ENCODE measurements at regions of chr16 and their contacts with region 1.

Region 1: DNA sequence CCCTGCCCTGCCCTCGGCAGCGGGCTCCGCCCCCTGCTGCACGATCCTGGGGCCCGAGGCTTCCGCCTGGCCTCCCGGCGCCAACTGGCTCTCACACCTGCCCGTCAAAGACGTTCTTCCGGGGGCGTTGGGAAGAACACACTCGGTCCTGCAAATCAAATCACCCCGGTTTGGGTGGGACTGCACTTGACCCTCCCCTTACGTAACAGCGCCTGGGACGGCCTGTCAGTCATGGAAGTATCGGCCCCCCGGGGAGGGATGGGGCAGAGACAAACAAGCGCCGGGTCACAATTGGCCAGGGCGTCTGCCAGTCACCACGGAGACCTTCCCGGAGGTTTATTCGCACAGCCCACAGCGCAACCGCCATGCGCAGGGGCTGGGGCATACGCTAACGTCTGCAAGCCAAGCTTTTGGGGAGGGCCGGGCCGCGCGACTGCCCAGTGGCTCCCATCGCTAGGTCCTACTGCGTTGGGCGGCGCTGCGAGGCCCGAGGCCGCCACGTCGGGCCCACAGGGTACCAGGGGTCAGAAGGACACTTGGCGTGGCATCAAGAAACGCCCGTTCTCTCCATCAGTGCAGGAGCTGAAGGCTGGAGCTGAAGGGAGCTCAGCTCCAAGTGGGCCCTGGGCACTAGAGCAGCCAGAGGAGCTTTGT is 388 bp upstream of the AKTIP start:
- DNase-seq: peak; percentile 100

Region 2: DNA sequence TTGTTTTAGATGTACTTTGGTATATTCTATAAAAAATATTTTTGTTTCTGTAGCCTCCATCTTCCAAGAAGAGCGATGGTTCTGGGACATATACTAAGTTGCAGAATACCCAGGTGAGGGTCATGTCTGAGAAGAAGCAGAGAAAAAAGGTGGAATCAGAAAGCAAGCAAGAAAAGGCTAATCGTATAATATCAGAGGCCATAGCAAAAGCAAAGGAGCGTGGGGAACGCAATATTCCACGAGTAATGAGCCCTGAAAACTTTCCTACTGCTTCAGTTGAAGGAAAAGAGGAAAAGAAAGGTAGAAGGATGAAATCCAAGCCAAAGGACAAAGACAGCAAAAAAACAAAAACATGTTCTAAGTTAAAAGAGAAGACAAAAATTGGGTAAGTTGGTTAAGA is 294.0 kb before region 1 on chr16:
- intact Hi-C with region 1: no loop called
- DNase-seq: no peak

Region 3: GRCh38 chr16:53435066-53435688 is 68.2 kb before region 1 on chr16:
- intact Hi-C with region 1: loop called (anchors 2 kb)
- DNase-seq: peak; percentile 43 to 88 (median 77)

Region 4: DNA sequence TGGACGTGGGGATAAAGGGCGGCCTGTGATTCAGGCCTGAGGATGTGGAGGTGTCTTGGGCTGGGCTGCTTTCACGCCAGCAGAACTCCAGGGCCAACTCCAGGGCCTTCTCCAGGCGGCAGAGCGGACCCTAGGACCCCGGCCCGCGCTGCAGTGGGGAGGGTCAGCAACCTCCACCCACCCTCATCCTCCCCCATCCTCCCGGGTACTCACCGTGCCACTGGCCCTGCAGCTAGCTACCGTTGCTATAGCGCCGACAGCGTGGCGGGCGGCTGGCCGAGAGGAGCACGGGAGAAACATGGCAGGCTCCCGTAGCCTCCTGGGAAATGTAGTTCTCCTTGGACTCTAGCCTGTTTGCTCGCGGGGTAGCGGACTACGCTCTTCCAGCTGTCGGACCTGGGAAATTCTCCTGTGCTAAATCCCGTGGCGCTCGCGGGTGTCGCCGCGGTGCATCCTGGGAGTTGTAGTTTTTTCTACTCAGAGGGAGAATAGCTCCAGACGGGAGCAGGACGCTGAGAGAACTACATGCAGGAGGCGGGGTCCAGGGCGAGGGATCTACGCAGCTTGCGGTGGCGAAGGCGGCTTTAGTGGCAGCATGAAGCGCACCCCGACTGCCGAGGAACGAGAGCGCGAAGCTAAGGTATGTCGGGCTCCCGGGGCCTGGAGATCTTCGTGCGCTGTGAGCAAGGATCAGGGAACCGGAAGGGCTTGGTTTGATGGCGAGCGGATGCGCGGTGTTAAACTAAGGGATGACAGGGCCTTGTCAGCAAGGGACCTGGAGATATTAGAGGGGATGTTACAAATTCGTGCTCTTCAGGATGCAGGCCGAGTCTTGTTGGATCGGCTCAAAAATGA is 200.4 kb after region 1 on chr16 and contains the starts of genes FTO and RPGRIP1L:
- intact Hi-C with region 1: loop called (anchors 10 kb)
- DNase-seq: peak; percentile 99 to 100 (median 100)